Posterior cingulate gyrus (tissue), 11 donors: ENCODE measurements at regions of chr16 and their contacts with region 1.

Region 1: GRCh38 chr16:77236063-77236511 is 36.9 kb downstream of the SYCE1L start:
- DNase-seq: peak; percentile 75 to 98 (median 91)

Region 2: GRCh38 chr16:77223184-77223583 is 12.9 kb before region 1 on chr16:
- intact Hi-C with region 1: no loop called
- DNase-seq: no peak

Region 3: DNA sequence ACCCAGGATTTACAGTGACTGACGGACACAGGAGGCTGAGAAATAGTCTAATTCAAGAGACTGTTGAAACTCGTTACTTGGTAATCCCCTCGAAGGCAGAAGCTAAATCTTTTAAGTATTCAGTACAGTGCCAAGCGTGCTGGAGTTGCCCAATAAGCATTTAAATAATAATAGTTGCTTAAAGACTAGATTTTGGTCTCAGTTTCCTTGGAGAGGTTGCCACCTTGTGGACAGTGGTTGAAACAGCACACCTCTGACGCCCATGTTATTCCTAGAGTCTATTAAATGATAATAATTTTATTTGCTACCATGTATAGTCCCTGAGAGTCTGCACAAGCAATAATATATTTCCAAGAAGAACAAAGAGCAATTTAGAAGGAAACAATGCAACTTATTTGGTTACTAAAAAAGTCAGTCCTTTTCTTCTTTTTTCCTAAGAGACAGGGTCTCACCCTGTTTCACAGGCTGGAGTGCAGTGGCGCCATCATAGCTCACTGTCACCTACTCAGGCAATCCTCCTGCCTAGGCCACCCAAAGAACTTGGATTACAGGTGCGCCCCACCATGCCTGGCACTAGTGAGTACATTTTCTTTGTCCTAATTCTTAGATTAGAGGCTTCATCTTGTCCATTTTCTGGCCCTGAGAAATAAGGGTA is 348.2 kb after region 1 on chr16:
- intact Hi-C with region 1: loop called (anchors 1 kb)
- DNase-seq: peak in 5 of 10 donors; percentile 15 to 61 (median 49)

Region 4: GRCh38 chr16:77660311-77660710 is 424.2 kb after region 1 on chr16:
- intact Hi-C with region 1: loop called (anchors 2 kb)
- DNase-seq: no peak